ENCODE measurements at regions of chr2 and their contacts with region 1.

Region 1: GRCh38 chr2:60581433-60582282 is 28.2 kb upstream of the BCL11A start:
- DNase-seq: peak; percentile 76
- ATAC-seq: peak; percentile 88
- H3K4me3 Mint-ChIP-seq: peak overlapping the region; percentile 67
- H3K27ac Mint-ChIP-seq: no peak overlapping the region
- H3K4me1 Mint-ChIP-seq: peaks cover 9% of the 10 kb centered on the region
- H3K27me3 Mint-ChIP-seq: peaks cover 41% of the 10 kb centered on the region
- CTCF ChIP-seq: peak; percentile 95

Region 2: DNA sequence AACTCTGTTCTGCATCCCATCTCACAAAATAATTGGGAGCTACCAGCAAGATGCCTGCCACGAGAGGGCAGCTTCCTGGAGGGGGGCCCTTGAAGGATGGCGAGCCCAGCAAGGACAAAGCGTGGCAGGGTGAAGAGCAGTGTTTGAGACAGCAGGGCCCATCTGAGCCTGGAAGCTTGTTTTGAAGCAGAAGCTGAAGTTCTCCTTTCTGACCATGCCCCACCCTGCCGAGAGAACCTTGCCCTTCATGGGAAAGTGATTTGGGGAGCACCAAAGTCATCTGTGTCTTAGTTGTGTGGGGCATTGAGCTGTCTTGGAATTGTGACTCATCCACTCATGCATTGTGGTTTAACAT is 244.5 kb before region 1 on chr2:
- CTCF ChIA-PET with region 1: interaction called, 15 read pairs
- POLR2A ChIA-PET with region 1: no interaction called
- DNase-seq: peak; percentile 52
- ATAC-seq: peak; percentile 88
- H3K4me3 Mint-ChIP-seq: no peak overlapping the region
- H3K27ac Mint-ChIP-seq: no peak overlapping the region
- H3K4me1 Mint-ChIP-seq: peaks cover 10% of the 10 kb centered on the region
- H3K27me3 Mint-ChIP-seq: no peaks in the 10 kb centered on the region; the same call in 1 of the 2 replicates
- CTCF ChIP-seq: no peak

Region 3: GRCh38 chr2:60535685-60536312 is 45.9 kb before region 1 on chr2:
- CTCF ChIA-PET with region 1: interaction called, 10 read pairs
- POLR2A ChIA-PET with region 1: no interaction called
- DNase-seq: no peak
- ATAC-seq: no peak
- H3K4me3 Mint-ChIP-seq: peak overlapping the region; percentile 14
- H3K27ac Mint-ChIP-seq: peak overlapping the region; percentile 85
- H3K4me1 Mint-ChIP-seq: peaks cover 97% of the 10 kb centered on the region
- H3K27me3 Mint-ChIP-seq: no peaks in the 10 kb centered on the region
- CTCF ChIP-seq: no peak

Region 4: DNA sequence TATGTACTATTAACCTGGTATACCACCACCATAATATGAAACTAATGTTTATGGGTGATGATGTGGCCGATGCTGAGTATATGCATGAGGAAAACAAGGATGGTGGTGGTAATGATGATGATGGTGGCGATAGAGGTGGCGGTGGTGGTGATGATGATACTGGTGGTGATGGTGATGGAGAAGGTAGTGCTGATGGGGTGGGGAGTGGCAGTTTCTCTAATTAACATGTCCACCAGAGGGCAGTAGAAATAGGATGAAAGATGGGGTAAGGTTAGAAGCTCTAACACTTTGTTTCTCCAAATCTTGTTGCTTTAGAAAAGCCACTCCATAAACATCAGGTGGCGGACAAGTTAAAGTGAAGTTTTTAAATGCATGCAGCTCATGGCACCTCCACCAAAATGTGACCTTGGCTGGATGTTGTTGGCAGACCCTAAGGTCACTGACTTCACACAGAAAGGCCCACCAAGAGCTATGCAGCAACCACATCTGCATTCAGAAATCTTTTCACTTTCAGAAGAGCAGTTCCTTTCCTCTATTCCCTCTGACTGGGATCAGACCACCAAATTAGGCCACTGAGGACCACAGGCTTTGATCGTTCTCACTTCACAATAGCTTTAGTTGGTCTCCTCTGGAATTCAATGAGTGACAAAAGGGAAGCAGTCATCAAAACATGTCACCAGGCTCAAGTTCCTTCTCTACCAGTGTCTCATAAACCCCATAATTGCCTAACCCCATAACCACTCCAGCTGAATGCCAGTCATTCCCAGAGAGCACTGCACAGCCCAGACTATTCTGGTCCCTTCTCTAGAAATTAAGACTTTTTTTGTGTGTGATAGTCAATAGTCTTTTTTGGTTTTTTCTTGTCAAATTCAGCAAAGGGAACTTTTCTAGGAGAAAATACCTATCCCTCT is 20.7 kb before region 1 on chr2:
- CTCF ChIA-PET with region 1: interaction called, 43 read pairs
- POLR2A ChIA-PET with region 1: no interaction called
- DNase-seq: no peak
- ATAC-seq: peak; percentile 71
- H3K4me3 Mint-ChIP-seq: no peak overlapping the region
- H3K27ac Mint-ChIP-seq: no peak overlapping the region
- H3K4me1 Mint-ChIP-seq: peaks cover 31% of the 10 kb centered on the region
- H3K27me3 Mint-ChIP-seq: peaks cover 19% of the 10 kb centered on the region
- CTCF ChIP-seq: peak; percentile 39; the same call in 1 of the 2 replicates

Region 5: GRCh38 chr2:60569680-60570111 is 12.0 kb before region 1 on chr2:
- CTCF ChIA-PET with region 1: interaction called, 35 read pairs
- POLR2A ChIA-PET with region 1: no interaction called
- DNase-seq: no peak
- ATAC-seq: peak; percentile 45
- H3K4me3 Mint-ChIP-seq: no peak overlapping the region
- H3K27ac Mint-ChIP-seq: no peak overlapping the region
- H3K4me1 Mint-ChIP-seq: peaks cover 19% of the 10 kb centered on the region
- H3K27me3 Mint-ChIP-seq: peaks cover 9% of the 10 kb centered on the region
- CTCF ChIP-seq: no peak

Region 6: DNA sequence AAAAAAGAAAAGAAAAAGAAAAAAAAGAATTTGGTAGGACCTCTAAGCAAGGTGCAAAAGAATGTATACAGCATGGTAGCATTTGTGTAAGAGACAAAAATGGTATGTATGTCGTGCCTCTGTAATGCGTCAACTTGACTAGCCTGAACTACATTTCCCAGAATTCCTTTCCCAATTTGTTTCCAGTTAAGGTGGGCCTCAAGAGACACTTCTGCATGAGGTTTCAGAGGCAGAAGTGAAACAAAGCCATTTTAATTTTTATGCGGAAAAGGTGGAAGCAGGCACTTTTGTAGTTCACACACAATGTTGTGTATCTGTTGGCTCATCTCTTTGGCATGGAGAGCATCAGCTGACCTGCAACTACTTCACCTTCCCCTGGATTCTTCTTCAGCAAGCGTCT is 118.0 kb after region 1 on chr2:
- CTCF ChIA-PET with region 1: no interaction called
- POLR2A ChIA-PET with region 1: no interaction called
- DNase-seq: no peak
- ATAC-seq: no peak
- H3K4me3 Mint-ChIP-seq: no peak overlapping the region
- H3K27ac Mint-ChIP-seq: no peak overlapping the region
- H3K4me1 Mint-ChIP-seq: peaks cover 5% of the 10 kb centered on the region; the same call in 1 of the 2 replicates
- H3K27me3 Mint-ChIP-seq: no peaks in the 10 kb centered on the region
- CTCF ChIP-seq: no peak

Region 7: DNA sequence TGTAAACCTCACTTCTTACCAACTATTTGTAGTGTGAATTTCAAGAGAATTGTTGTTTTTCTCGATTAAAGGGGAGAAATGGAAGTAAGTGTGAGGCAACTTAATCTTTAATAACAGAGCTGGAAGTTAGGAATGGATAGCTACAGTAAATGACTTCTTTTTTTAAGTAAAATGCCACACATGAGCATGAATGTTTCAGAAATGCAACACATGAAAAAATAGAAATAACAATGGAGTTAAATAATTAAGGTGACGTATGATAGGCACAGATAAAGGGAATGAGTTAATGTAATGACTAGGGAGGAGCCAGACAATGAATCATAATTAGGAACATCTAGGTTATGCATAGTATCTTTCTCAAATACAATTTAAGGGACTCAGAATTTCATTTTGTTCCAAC is 303.1 kb after region 1 on chr2:
- CTCF ChIA-PET with region 1: no interaction called
- POLR2A ChIA-PET with region 1: no interaction called
- DNase-seq: no peak
- ATAC-seq: no peak
- H3K4me3 Mint-ChIP-seq: no peak overlapping the region
- H3K27ac Mint-ChIP-seq: no peak overlapping the region
- H3K4me1 Mint-ChIP-seq: peaks cover 35% of the 10 kb centered on the region
- H3K27me3 Mint-ChIP-seq: peaks cover 8% of the 10 kb centered on the region
- CTCF ChIP-seq: no peak